Mammary epithelial cell (primary cell): ENCODE measurements at regions of chr1 and their contacts with region 1.

Region 1: DNA sequence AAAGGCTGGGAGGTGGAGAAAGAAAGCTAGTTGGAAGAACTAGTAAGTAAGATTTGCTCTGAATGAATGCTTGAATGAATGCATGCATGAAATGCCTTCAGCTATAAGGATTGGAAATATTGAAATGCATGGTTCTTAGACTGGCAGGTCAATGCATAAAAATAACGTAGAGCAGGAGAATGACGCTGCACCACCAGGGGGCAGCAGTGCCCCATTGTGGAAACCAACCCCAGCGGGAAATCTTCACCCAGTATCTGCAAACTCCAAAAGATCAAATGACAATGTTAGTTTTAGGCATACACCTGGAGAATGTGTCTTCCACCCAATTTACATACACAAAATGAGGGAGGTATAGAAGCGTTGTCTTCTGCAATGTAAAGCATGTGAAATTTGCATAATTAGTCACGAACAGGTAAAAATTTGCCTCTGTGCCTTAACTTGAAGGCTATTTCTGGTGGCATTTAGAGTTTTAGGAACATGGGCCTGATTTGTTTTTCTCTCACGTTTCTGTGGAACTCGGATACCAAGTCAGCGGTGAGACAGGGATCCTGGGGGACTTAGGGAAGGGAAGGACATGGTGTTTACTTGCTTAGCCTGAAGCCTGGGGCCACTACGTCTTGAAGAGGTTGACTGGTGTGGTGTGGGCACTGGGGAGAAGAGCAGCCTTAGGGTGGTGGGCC is 78.6 kb downstream of the HHAT start:
- DNase-seq: peak; percentile 50
- H3K4me3 ChIP-seq: no peak overlapping the region
- H3K27ac ChIP-seq: no peak overlapping the region
- H3K4me1 ChIP-seq: peaks cover 21% of the 10 kb centered on the region
- H3K27me3 ChIP-seq: no peaks in the 10 kb centered on the region
- CTCF ChIP-seq: peak; percentile 96 to 99

Region 2: GRCh38 chr1:210448297-210448892 is 41.0 kb after region 1 on chr1:
- CTCF ChIA-PET with region 1: interaction called, 3 read pairs
- dilution Hi-C with region 1: no loop called
- in situ Hi-C with region 1: no loop called
- intact Hi-C with region 1: loop called (anchors 2 kb)
- DNase-seq: peak; percentile 18
- H3K4me3 ChIP-seq: no peak overlapping the region
- H3K27ac ChIP-seq: no peak overlapping the region
- H3K4me1 ChIP-seq: no peaks in the 10 kb centered on the region
- H3K27me3 ChIP-seq: no peaks in the 10 kb centered on the region
- CTCF ChIP-seq: peak; percentile 63 to 68

Region 3: GRCh38 chr1:210553741-210554140 is 146.4 kb after region 1 on chr1:
- CTCF ChIA-PET with region 1: no interaction called
- dilution Hi-C with region 1: no loop called
- in situ Hi-C with region 1: no loop called
- intact Hi-C with region 1: no loop called
- DNase-seq: no peak
- H3K4me3 ChIP-seq: no peak overlapping the region
- H3K27ac ChIP-seq: no peak overlapping the region
- H3K4me1 ChIP-seq: no peaks in the 10 kb centered on the region
- H3K27me3 ChIP-seq: no peaks in the 10 kb centered on the region
- CTCF ChIP-seq: no peak